Endothelial cell of umbilical vein (primary cell): ENCODE measurements at regions of chr1 and their contacts with region 1.

Region 1: DNA sequence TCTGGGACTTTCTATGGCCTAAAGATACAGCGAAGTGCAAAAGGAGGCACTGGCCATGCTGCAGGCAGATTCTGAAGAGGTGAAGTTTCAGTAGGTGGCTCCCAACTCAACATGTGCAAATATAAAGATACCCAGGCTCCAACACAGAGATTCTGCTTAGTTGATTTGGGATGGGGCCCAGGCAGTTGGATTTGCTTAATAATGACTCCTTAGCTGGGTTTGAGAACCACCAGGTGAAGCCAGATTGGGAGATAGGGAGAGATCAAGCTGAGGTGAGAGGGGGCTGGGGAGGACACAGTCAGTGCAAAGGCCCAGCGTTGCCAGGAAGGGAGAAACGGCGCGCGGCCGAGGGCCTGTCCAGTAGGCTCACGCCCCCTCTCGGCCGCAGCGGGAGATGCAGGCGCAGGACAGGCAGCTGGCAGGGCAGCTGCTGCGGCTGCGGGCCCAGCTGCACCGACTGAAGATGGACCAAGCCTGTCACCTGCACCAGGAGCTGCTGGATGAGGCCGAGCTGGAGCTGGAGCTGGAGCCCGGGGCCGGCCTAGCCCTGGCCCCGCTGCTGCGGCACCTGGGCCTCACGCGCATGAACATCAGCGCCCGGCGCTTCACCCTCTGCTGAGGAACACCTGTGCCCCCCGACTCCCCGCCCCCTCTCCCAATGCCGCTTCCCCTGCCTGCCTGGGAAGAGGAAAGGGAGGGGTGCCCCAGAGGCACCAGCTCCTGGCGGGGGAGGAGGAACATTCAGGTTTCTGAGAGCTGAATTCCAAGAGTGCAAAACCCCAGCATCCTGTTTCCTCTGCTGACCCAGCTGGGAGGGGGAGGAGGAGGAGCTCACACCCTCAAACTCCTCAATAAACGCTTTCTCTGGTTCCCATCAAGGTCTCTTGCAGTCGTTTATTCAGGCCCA is 1.2 kb downstream of the FAM167B start:
- DNase-seq: peak; percentile 74
- H3K4me3 ChIP-seq: peak overlapping the region in 1 of 3 experiments; percentile 29
- H3K27ac ChIP-seq: peak overlapping the region; percentile 60
- H3K4me1 ChIP-seq: peaks cover 47% of the 10 kb centered on the region
- H3K27me3 ChIP-seq: no peaks in the 10 kb centered on the region
- CTCF ChIP-seq: peak; percentile 96 to 98
- POLR2A ChIP-seq: no peak

Region 2: DNA sequence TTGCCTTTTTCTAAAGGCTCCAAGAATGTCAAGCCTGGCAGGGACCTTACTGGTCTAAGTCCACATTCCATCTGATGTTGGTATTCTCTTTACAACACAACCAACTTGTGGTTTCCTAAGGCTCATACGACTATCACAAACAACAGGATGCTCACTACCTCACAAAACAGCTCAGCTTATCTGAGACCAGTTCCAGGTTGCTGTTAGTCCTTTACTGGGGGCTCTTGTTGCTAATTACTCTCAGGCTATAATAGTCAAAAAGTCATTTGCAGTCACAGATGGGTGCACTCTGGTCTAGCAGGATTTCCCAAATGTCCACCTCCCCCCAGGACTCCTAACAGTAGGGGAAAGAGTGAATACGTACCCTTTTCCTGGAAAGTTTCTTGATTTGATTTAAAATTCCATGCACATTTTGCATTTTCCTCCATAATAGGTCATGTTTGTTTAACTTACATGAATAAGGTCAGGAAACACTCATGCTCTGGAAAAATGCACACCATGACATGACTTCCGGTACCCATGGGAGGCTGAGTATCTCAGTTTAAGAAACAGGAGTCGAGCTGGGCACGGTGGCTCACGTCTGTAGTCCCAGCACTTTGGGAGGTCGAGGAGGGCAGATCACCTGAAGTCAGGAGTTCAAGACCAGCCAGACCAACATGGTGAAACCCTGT is 18.8 kb after region 1 on chr1:
- CTCF ChIA-PET with region 1: interaction called, 26 read pairs
- POLR2A ChIA-PET with region 1: interaction called, 18 read pairs
- dilution Hi-C with region 1: no loop called
- intact Hi-C with region 1: loop called (anchors 1 kb)
- DNase-seq: peak; percentile 95
- H3K4me3 ChIP-seq: peak overlapping the region in 1 of 3 experiments; percentile 15
- H3K27ac ChIP-seq: peak overlapping the region; percentile 83
- H3K4me1 ChIP-seq: peaks cover 5% of the 10 kb centered on the region
- H3K27me3 ChIP-seq: no peaks in the 10 kb centered on the region
- CTCF ChIP-seq: no peak
- POLR2A ChIP-seq: no peak

Region 3: DNA sequence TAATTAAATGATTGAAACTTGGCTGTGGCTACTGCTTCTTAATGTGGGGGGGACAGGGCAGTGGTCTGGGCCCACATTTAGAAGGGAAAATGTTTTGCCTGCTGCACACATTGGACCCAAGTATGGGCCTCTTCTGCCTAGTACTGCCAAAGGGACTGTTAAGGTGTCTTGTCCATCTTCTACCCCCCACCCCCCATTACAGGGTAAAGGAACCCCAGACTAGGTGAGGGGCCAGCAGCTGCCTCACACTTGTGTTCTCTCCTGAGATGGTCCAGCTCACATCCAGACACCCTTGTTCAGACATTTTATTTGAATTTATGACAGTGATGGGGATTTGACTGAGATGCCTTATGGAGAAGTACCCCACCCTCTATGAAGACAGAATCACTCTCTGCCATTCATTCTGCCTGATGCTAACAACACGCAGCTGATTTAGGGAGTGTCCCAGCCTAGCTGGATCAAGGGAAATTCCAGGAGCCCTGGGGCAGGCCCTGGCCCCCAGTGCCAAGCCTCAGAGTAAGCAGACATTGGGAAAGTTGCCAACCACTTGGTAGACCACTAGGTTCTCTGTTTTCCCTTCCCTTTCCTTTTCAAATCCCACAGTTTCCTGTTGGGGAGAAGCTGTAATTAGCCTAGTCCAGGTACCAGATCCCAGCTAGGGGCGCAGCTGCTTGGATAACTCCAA is 526.9 kb after region 1 on chr1:
- CTCF ChIA-PET with region 1: no interaction called
- POLR2A ChIA-PET with region 1: no interaction called
- dilution Hi-C with region 1: no loop called
- intact Hi-C with region 1: no loop called
- DNase-seq: peak; percentile 81
- H3K4me3 ChIP-seq: no peak overlapping the region
- H3K27ac ChIP-seq: peak overlapping the region; percentile 45
- H3K4me1 ChIP-seq: peaks cover 18% of the 10 kb centered on the region
- H3K27me3 ChIP-seq: no peaks in the 10 kb centered on the region
- CTCF ChIP-seq: no peak
- POLR2A ChIP-seq: no peak